Left ventricle myocardium superior (tissue), 1 donor: ENCODE measurements at regions of chr6 and their contacts with region 1.

Region 1: DNA sequence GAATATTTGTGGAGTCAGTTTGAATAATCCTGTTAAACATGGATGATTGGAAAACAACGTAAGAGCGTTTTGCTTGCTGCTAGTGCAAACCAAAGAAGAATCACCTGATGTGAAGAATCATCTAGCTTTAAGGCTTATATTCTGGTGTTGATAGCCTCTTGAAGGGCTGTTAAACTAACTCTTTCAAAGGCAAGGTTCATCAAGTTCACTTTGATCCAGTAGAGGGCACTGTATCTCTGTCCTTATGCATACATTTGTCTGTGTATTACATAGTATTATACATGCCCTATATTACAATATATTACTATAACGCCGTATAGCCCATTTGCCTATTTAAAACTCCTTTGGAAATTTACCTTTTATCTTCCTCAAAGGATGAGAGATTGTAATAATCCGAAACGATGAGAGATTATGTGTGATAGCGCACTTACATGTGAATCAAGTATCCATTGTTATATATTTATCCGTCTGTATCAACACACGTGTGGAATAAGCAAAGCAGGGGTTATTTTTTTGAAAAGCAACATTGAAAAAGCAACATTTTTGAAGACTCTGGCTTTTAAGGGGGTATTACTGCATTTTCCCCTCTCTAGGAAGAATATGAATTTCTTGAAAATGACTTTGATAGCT is 50.8 kb upstream of the NRN1 start:
- DNase-seq: no peak
- ATAC-seq: peak; percentile 60

Region 2: DNA sequence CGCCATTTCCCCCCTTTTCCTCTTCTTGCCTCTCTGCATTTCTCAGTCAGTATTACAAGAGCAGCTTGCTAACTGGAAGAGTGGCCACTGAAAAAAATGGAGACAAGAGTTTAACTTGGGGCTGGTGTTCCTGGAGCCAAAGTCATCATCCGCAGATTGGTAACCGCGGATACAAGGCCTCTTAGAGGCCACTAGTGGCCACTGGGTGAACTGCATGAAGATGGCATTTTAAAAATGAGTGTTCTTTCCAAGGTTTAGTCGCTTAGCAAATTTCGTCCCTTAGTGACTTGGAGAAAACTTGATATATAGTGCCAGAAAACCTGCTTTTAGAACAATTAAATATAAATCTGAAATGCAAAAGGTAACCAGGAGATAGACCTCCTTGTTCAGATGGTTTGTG is 258.1 kb after region 1 on chr6:
- intact Hi-C with region 1: loop called (anchors 10 kb)
- DNase-seq: peak; percentile 43
- ATAC-seq: no peak

Region 3: GRCh38 chr6:6547110-6547879 is 489.8 kb after region 1 on chr6:
- intact Hi-C with region 1: loop called (anchors 2 kb)
- DNase-seq: peak; percentile 85
- ATAC-seq: peak; percentile 96